ENCODE measurements at regions of chr13 and their contacts with region 1.

Region 1: GRCh38 chr13:30673669-30674521 is 56.2 kb downstream of the USPL1 start:
- DNase-seq: peak; percentile 85
- H3K4me3 ChIP-seq: peak overlapping the region; percentile 68
- H3K27ac ChIP-seq: peak overlapping the region; percentile 81
- H3K4me1 ChIP-seq: peaks cover 13% of the 10 kb centered on the region
- H3K27me3 ChIP-seq: no peaks in the 10 kb centered on the region
- CTCF ChIP-seq: peak; percentile 82

Region 2: GRCh38 chr13:30422054-30422839 is 251.6 kb before region 1 on chr13 and contains the start of gene UBE2L5:
- intact Hi-C with region 1: no loop called
- DNase-seq: peak; percentile 82
- H3K4me3 ChIP-seq: peak within 1 kb of the TSS; percentile 73
- H3K27ac ChIP-seq: peak within 1 kb of the TSS; percentile 95
- H3K4me1 ChIP-seq: peaks cover 15% of the 10 kb centered on the region
- H3K27me3 ChIP-seq: no peaks in the 10 kb centered on the region
- CTCF ChIP-seq: no peak
- total RNA-seq, gene UBE2L5: not detected

Region 3: GRCh38 chr13:30545320-30545719 is 128.6 kb before region 1 on chr13:
- intact Hi-C with region 1: no loop called
- DNase-seq: no peak
- H3K4me3 ChIP-seq: no peak overlapping the region
- H3K27ac ChIP-seq: no peak overlapping the region
- H3K4me1 ChIP-seq: no peaks in the 10 kb centered on the region
- H3K27me3 ChIP-seq: no peaks in the 10 kb centered on the region
- CTCF ChIP-seq: no peak

Region 4: GRCh38 chr13:30802953-30803478 is 129.1 kb after region 1 on chr13:
- intact Hi-C with region 1: loop called (anchors 10 kb)
- DNase-seq: peak; percentile 86
- H3K4me3 ChIP-seq: peak overlapping the region; percentile 55
- H3K27ac ChIP-seq: no peak overlapping the region
- H3K4me1 ChIP-seq: peaks cover 35% of the 10 kb centered on the region
- H3K27me3 ChIP-seq: no peaks in the 10 kb centered on the region
- CTCF ChIP-seq: peak; percentile 97